Calu3 (cell line): ENCODE measurements at regions of chr16 and their contacts with region 1.

Region 1: GRCh38 chr16:66315210-66315825 is 51.2 kb upstream of the CDH5 start:
- DNase-seq: peak; percentile 80
- H3K4me3 Mint-ChIP-seq: no peak overlapping the region
- H3K27ac Mint-ChIP-seq: no peak overlapping the region
- H3K4me1 Mint-ChIP-seq: no peaks in the 10 kb centered on the region
- H3K27me3 Mint-ChIP-seq: peaks cover 64% of the 10 kb centered on the region
- CTCF ChIP-seq: peak; percentile 96

Region 2: GRCh38 chr16:66278111-66278932 is 37.0 kb before region 1 on chr16:
- CTCF ChIA-PET with region 1: interaction called, 26 read pairs
- intact Hi-C with region 1: loop called (anchors 1 kb)
- DNase-seq: peak; percentile 93
- H3K4me3 Mint-ChIP-seq: peak overlapping the region; percentile 34
- H3K27ac Mint-ChIP-seq: peak overlapping the region; percentile 76
- H3K4me1 Mint-ChIP-seq: peaks cover 52% of the 10 kb centered on the region
- H3K27me3 Mint-ChIP-seq: no peaks in the 10 kb centered on the region
- CTCF ChIP-seq: no peak

Region 3: GRCh38 chr16:66516808-66517585 is 201.7 kb after region 1 on chr16:
- CTCF ChIA-PET with region 1: no interaction called
- intact Hi-C with region 1: no loop called
- DNase-seq: peak; percentile 98
- H3K4me3 Mint-ChIP-seq: peak overlapping the region; percentile 60
- H3K27ac Mint-ChIP-seq: peak overlapping the region; percentile 99
- H3K4me1 Mint-ChIP-seq: peaks cover 82% of the 10 kb centered on the region
- H3K27me3 Mint-ChIP-seq: no peaks in the 10 kb centered on the region
- CTCF ChIP-seq: no peak